AG04450 (cell line): ENCODE measurements at regions of chr2 and their contacts with region 1.

Region 1: DNA sequence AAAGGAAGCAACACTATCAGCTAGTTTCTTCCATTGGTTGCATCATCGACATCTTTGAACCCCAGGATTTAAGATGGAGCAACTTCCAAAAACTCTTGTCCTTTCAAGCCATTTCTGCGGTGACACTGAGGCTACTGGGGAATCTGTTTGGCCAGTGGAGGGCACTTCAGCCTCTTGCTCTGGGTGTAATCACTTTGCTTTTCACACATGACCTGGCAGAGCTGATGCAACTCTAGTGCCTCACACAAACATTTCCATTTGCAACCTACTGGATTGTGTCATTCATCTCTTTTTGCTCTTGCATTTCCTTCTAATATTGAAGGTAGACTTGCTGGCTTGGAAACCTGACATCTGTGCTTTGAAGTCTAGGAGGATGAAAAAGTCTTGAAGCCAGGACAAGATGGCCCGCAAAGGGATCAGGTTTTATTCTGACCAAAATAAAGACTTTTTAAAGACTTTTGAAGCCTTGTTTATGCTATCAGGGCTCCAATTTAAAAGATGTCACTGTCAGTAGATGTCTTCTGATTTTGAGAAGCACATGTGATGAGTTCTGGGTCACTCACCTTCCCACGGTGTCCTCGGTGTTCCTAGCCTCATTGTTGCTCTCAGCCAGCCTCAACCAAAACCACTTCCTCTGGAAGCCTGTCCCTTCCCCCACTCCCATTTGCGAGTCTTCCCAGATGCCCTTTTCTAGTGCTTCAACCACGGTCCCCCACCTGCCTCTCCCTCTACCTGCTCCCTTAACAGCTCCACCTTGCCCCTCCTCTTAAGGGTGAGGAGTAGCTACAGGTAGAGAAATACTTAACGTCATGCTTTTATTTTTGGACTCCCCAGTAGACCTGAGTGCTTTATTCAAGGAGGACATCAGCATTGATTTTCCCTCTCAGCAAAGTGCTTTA is 69.7 kb upstream of the KCNE4 start:
- DNase-seq: peak; percentile 47
- H3K4me3 ChIP-seq: no peak overlapping the region
- H3K27ac ChIP-seq: no peak overlapping the region
- H3K27me3 ChIP-seq: no peaks in the 10 kb centered on the region
- CTCF ChIP-seq: peak; percentile 64

Region 2: GRCh38 chr2:222993920-222994650 is 11.8 kb after region 1 on chr2:
- CTCF ChIA-PET with region 1: interaction called, 21 read pairs
- POLR2A ChIA-PET with region 1: no interaction called
- DNase-seq: peak; percentile 89
- H3K4me3 ChIP-seq: peak overlapping the region; percentile 10; the same call in 1 of the 2 replicates
- H3K27ac ChIP-seq: peak overlapping the region; percentile 91
- H3K27me3 ChIP-seq: no peaks in the 10 kb centered on the region
- CTCF ChIP-seq: no peak

Region 3: DNA sequence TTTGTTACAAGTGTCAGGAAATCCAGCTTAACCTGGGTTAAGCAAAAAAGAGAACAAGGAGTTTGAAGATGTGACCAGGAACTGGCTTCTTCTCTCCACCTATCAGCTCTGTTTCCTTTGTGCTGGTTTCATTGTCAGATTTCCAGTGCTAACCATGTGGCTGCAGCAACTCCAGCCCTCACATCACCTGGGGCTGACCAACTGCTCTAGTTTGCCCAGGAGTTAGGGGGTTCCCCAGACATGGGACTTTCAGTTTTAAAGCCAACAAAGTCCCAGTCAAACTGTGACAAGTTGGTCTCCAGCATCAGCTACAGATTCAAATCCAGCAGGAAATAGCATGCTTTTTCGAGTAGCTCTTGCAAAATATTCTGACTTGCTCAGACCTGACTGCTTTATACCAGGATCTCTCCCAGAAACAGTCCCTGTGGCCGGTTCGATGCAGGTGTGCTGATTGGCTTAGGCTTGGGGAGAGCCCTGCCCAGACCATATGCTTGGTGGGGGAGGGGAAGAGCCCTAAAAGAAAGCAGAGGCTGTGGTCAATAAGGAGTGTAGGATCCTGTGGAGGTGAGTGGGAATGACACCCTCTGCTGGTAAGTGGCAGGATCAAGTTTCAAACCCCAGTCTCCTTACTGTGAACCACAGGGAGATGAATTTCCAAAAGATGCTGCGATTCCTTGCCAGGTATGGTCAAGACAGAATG is 119.2 kb after region 1 on chr2:
- CTCF ChIA-PET with region 1: interaction called, 15 read pairs
- POLR2A ChIA-PET with region 1: no interaction called
- DNase-seq: no peak
- H3K4me3 ChIP-seq: no peak overlapping the region
- H3K27ac ChIP-seq: no peak overlapping the region
- H3K27me3 ChIP-seq: no peaks in the 10 kb centered on the region
- CTCF ChIP-seq: peak; percentile 66